ENCODE measurements at regions of chr14 and their contacts with region 1.

Region 1: DNA sequence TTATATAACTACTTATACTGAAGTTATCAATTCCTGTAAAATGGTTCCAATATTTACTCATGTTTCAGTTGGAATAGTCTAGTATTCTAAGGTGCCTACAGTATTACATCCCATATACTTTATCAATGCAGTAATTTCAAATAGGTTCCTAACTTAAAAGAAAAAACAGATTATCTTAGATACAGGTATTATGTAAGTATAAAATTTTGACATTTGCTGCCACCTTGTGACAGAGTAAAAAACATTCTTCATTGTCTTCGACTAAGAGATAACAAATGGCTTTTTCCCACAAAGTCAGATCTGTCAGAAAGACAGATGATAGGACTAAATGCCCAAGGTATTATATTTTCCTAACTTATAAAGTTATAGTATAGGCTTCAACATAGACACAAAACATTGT is 78.7 kb downstream of the TXNDC16 start:
- DNase-seq: no peak
- H3K4me3 ChIP-seq: no peak overlapping the region
- H3K27ac ChIP-seq: no peak overlapping the region
- H3K4me1 ChIP-seq: no peaks in the 10 kb centered on the region
- H3K27me3 ChIP-seq: no peaks in the 10 kb centered on the region
- CTCF ChIP-seq: peak in 2 of 4 experiments; percentile 61 to 63
- POLR2A ChIP-seq: no peak

Region 2: GRCh38 chr14:51989293-51990234 is 484.0 kb before region 1 on chr14 and contains the start of gene RTRAF:
- intact Hi-C with region 1: loop called (anchors 10 kb)
- DNase-seq: peak; percentile 94
- H3K4me3 ChIP-seq: peak within 1 kb of the TSS; percentile 64 to 87
- H3K27ac ChIP-seq: peak within 1 kb of the TSS; percentile 76 to 86
- H3K4me1 ChIP-seq: peaks cover 4% of the 10 kb centered on the region
- H3K27me3 ChIP-seq: no peaks in the 10 kb centered on the region
- CTCF ChIP-seq: peak in 1 of 4 experiments; percentile 31
- POLR2A ChIP-seq: peak; percentile 68
- total RNA-seq, gene RTRAF: 62.6 to 105 TPM

Region 3: DNA sequence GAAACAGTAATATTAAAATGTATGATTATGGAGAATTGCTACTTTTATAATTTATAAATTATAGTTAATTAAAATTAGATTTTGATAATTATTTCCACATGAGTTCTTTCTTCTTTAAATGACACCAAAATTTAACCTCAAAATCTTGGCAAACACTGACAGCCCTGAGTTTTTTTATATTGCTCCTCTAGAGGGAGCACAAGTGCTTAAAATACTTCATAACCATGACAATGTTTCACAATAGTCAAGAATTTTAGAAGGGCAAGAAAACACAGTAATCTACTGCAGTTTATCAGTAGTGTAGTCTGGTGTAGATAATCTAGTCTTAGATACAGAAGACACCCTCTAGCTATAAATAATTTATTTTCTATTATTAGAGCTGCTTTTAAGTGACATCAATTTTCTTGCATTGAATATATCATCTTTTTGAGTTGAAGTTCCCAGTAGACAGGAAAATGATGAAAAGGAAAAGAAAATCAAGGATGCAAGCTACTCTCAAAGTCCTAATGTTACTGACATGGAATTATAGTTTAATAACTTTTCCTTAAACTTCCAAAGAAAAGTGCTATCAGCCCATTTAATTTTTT is 173.8 kb before region 1 on chr14:
- intact Hi-C with region 1: loop called (anchors 2 kb)
- DNase-seq: no peak
- H3K4me3 ChIP-seq: no peak overlapping the region
- H3K27ac ChIP-seq: no peak overlapping the region
- H3K4me1 ChIP-seq: no peaks in the 10 kb centered on the region
- H3K27me3 ChIP-seq: no peaks in the 10 kb centered on the region
- CTCF ChIP-seq: peak; percentile 43 to 83 (median 68)
- POLR2A ChIP-seq: no peak

Region 4: DNA sequence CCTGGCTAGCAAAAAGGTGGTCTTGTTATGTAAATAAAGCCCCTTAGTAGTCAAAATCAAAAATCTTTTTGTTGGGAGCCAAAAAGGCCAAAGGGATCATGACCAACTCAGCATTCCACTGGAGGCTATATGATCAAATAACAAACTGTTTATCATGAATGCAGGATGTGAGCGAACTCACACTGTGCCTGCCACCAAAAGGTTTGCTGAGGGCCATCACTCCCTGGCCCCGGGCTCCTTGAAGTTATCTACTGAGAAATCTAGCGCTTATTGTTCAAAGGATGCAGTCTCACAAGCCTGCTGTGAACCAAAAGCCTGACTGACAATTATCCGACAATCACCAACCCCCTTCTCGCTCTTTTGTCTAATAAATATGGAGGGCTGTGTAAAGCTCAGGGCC is 786.7 kb after region 1 on chr14:
- intact Hi-C with region 1: no loop called
- DNase-seq: no peak
- H3K4me3 ChIP-seq: no peak overlapping the region
- H3K27ac ChIP-seq: no peak overlapping the region
- H3K4me1 ChIP-seq: no peaks in the 10 kb centered on the region
- H3K27me3 ChIP-seq: no peaks in the 10 kb centered on the region
- CTCF ChIP-seq: no peak
- POLR2A ChIP-seq: no peak

Measured in prostate gland (tissue), 2 donors.